Activated CD4-positive, alpha-beta memory T cell treated with anti-CD3 and anti-CD28 coated beads, Interleukin-2, amount 10 ng/mL, durations not matched to agents 7 days and 5 days (primary cell): ENCODE measurements at regions of chr12 and their contacts with region 1.

Region 1: GRCh38 chr12:111685744-111686517 is at the starts of genes ACAD10 and BRAP:
- DNase-seq: peak; percentile 95
- H3K4me3 Mint-ChIP-seq: peak within 1 kb of the TSS; percentile 99
- H3K27ac Mint-ChIP-seq: peak within 1 kb of the TSS; percentile 93
- H3K4me1 Mint-ChIP-seq: peaks cover 36% of the 10 kb centered on the region
- H3K27me3 Mint-ChIP-seq: no peaks in the 10 kb centered on the region
- total RNA-seq, gene ACAD10: 25.3 to 28.5 TPM
- total RNA-seq, gene BRAP: 18.1 to 19.4 TPM

Region 2: DNA sequence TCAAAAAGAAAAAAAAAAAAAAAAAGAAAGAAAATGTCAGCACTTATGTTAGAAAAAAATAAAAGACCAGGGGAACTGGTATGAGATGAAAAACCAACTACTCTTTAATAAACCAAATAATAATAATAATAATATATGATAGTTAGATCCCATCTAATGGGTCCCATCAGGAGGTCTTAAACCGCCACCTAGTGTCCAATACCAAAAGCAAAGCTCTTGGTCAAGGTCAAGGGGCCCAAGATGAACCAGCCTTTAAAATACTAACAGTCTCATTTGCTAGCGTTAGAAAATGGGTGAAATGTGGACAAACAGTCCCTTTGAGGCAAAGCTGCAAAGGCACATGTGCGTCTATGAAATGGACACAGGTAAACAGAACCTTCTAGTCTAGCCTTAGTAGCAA is 12.4 kb before region 1 on chr12:
- CTCF ChIA-PET with region 1: interaction called, 5 read pairs
- POLR2A ChIA-PET with region 1: interaction called, 32 read pairs
- DNase-seq: no peak
- H3K4me3 Mint-ChIP-seq: no peak overlapping the region
- H3K27ac Mint-ChIP-seq: no peak overlapping the region
- H3K4me1 Mint-ChIP-seq: no peaks in the 10 kb centered on the region
- H3K27me3 Mint-ChIP-seq: no peaks in the 10 kb centered on the region

Region 3: DNA sequence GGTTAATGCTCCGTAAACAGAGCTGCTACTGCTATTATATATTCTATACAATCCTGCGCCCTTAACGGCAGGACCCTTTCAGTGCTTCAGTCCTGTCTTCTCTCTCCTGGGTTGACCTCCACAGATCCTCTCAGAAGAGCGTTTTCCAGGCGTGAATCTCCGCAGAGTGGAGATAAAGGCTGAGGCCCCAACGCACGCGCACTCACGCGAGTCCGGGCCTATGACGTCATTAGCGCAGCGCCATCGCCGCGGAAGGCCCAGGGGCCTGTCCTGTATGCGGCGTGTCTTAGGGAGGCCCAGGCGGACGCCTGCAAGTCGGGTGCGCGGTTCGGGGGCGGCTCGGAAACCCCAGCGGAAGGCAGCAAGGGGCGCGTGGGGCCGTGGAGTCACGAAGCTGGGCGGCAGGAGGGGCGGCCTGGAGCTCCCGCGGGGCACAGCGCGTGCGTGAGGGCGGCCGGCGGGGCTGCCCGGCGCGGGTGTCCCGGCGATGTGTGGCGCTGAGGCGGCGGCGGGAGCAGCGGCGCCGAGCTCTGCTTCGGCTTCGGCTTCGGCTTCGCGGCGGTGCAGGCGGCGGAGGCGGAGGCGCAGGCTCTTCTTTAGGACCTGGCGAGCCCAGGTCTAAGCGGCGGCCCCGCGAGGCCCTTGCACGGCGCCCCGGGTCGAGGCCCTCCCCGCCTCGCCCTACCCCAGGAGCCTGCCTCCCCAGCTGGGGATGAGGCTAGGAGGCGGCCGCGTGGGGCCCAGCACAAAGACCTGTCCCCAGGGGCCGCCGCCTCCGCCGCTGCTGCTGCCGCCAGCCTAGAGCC is 156.0 kb after region 1 on chr12 and contains the start of gene MAPKAPK5:
- CTCF ChIA-PET with region 1: no interaction called
- POLR2A ChIA-PET with region 1: interaction called, 34 read pairs
- DNase-seq: peak; percentile 96
- H3K4me3 Mint-ChIP-seq: peak within 1 kb of the TSS; percentile 98
- H3K27ac Mint-ChIP-seq: peak within 1 kb of the TSS; percentile 92
- H3K4me1 Mint-ChIP-seq: peaks cover 51% of the 10 kb centered on the region
- H3K27me3 Mint-ChIP-seq: no peaks in the 10 kb centered on the region
- total RNA-seq, gene MAPKAPK5: 40.4 to 44.8 TPM